Dorsolateral prefrontal cortex (tissue), 120 donors: ENCODE measurements at regions of chr10 and their contacts with region 1.

Region 1: DNA sequence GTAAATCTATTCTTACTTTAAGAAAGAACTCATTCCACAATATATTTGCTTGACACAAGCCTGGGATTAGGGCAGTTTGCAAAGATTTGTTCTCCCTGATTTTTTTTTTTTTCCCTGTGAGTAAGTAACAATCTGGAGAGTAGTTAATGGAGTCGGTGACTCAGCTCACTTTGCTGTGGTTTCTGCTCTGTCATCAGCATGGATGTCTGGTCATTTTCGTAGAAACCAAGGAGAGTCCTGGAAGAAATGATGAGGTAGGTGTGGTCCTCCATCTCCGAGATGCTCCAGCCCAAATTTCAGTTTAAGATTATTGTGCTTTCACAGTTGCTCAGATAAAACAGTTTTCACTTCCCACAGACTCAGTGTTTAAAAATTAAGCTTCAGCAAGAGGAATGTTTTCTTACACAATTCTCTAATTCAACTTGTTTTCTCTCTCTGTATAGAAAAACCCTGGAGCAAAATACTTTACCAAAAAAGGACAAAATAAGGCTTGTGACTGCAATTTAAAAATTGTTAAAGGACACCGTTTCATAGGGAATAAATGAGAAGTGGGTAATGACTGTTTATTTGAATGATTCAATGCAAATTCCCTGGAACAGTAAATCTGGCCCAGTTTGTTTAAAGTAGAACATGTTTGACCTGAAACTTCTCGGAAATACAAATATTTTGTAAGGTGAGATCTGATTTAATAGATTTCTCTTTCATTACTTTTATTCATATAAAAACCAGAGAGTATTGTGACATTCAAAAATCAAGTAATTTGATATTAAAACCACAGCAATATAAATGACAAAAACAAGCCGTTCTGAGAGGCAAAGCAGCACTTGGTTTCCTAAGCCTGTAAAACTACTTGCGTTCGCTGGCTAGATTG is 76.5 kb upstream of the PITRM1 start:
- DNase-seq: peak in 1 of 10 donors; percentile 32
- H3K4me3 ChIP-seq: peak overlapping the region in 1 of 59 donors; percentile 10
- H3K27ac ChIP-seq: peak overlapping the region in 36 of 59 donors; percentile 1 to 76 (median 32)
- H3K27me3 ChIP-seq: peaks cover 0 to 4% (median 0%) of the 10 kb centered on the region in 45 donors
- CTCF ChIP-seq: no peak

Region 2: GRCh38 chr10:3213208-3213607 is 35.9 kb before region 1 on chr10:
- intact Hi-C with region 1: no loop called
- DNase-seq: peak in 1 of 10 donors; percentile 27
- H3K4me3 ChIP-seq: no peak overlapping the region
- H3K27ac ChIP-seq: no peak overlapping the region
- H3K27me3 ChIP-seq: peaks cover 0 to 3% (median 0%) of the 10 kb centered on the region in 45 donors
- CTCF ChIP-seq: no peak

Region 3: GRCh38 chr10:3398825-3399646 is 149.9 kb after region 1 on chr10:
- intact Hi-C with region 1: loop called in 1 of 2 experiments (anchors 10 kb)
- DNase-seq: peak in 8 of 10 donors; percentile 42 to 77 (median 60)
- H3K4me3 ChIP-seq: peak overlapping the region in 9 of 59 donors; percentile 2 to 42 (median 22)
- H3K27ac ChIP-seq: peak overlapping the region in 1 of 59 donors; percentile 10
- H3K27me3 ChIP-seq: no peaks in the 10 kb centered on the region
- CTCF ChIP-seq: peak in 1 of 56 donors; percentile 9

Region 4: GRCh38 chr10:4656576-4657182 is 1407.6 kb after region 1 on chr10:
- intact Hi-C with region 1: loop called in 1 of 2 experiments (anchors 10 kb)
- DNase-seq: peak in 6 of 10 donors; percentile 32 to 68 (median 58)
- H3K4me3 ChIP-seq: no peak overlapping the region
- H3K27ac ChIP-seq: no peak overlapping the region
- H3K27me3 ChIP-seq: no peaks in the 10 kb centered on the region
- CTCF ChIP-seq: peak; percentile 66 to 97 (median 88)